ENCODE measurements at regions of chr6 and their contacts with region 1.

Region 1: GRCh38 chr6:148501178-148501590 is 158.5 kb downstream of the SASH1 start:
- DNase-seq: peak; percentile 87
- ATAC-seq: peak; percentile 100
- H3K4me3 ChIP-seq: no peak overlapping the region
- H3K27ac ChIP-seq: peak overlapping the region; percentile 52
- H3K4me1 ChIP-seq: peaks cover 11% of the 10 kb centered on the region
- H3K27me3 ChIP-seq: no peaks in the 10 kb centered on the region
- CTCF ChIP-seq: no peak

Region 2: DNA sequence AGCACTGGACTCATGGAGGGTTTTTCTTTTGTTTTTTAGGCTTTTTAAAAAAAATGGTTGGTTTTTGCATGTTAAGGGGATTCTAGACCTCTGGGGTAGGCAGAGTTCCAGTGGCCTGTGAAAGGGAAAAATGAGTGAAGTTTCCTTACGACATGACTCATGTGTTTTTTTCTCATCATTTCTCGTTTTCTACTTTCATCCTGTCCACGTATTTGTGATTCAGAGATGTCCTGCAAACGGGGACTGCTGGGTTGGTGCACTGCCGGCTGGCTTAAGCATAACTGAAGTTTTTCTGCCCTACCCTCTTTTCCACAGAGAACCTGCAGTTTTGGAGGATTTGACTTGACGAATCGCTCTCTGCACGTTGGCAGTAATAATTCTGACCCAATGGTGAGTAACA is 23.8 kb after region 1 on chr6:
- CTCF ChIA-PET with region 1: no interaction called
- POLR2A ChIA-PET with region 1: interaction called, 4 read pairs
- intact Hi-C with region 1: loop called (anchors 2 kb)
- DNase-seq: peak; percentile 68
- ATAC-seq: peak; percentile 84
- H3K4me3 ChIP-seq: peak overlapping the region; percentile 69
- H3K27ac ChIP-seq: peak overlapping the region; percentile 98
- H3K4me1 ChIP-seq: peaks cover 25% of the 10 kb centered on the region
- H3K27me3 ChIP-seq: no peaks in the 10 kb centered on the region
- CTCF ChIP-seq: no peak

Region 3: DNA sequence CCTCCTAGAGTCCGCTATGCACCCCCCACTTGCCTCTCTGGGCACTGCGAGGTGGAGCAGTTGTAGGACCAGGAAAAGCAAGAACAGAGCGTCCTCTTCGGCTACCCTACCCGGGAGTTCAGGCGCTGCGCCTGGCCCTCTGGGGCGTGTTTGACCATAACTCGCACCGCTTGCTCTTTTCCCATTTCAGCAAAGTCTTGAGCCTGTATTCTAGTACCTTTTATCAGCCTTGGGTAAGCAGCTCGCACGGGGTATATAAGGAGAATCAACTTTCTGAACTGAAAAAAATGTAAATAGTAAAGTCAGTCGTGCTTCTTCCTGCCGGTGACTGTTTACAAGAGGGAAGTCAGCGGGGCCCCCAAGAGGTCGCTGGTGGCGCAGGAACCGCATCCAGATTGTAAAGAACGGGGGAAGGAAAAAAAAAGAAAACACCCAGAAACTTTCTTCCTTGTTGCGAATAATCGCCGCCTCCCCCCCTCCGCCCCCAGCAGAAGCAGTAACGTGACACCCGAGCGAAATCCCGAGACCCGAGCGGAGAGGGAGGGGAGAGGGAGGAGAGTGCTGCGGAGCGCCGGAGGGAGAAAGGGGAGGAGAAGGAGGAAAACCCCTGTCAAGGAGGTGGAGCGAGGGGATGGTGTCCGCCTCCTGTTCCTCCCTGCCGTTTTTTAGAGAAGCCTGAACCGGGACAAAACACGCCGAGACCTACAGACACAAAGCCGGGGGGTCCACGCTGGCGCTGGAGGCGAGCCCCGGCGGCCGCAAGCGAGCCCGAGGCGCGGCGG is 245.4 kb after region 1 on chr6 and contains the start of gene UST:
- CTCF ChIA-PET with region 1: no interaction called
- POLR2A ChIA-PET with region 1: no interaction called
- intact Hi-C with region 1: no loop called
- DNase-seq: peak; percentile 74
- ATAC-seq: peak; percentile 71
- H3K4me3 ChIP-seq: peak within 1 kb of the TSS; percentile 88
- H3K27ac ChIP-seq: 0 out of 2 replicates have a peak within 1 kb of the TSS, but pooled peaks have one; percentile 5
- H3K4me1 ChIP-seq: peaks cover 7% of the 10 kb centered on the region; the same call in 1 of the 2 replicates
- H3K27me3 ChIP-seq: no peaks in the 10 kb centered on the region
- CTCF ChIP-seq: peak; percentile 51; the same call in 1 of the 2 replicates
- total RNA-seq, gene UST: 3.9 and 7.9 TPM in 2 replicates

Region 4: DNA sequence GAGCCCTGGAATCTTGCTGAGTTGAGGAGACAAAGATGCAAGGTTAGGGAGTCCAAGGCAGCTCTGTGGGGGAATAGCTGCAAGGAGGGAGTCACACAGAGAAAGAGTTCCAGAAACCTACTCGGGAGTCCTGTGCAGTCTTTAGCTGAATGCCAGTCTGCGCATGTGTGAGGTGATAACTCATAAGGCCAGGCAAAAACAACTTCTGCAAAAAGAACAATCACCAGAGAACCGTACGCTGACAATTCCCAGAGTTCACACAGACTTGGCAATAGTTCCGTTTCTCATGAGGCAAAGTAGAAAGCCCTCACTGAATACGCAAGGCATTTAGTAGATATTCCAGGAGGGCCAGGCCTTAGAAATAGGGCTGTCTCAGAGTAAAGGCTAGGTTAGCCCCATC is 681.1 kb after region 1 on chr6:
- CTCF ChIA-PET with region 1: no interaction called
- POLR2A ChIA-PET with region 1: no interaction called
- intact Hi-C with region 1: no loop called
- DNase-seq: no peak
- ATAC-seq: no peak
- H3K4me3 ChIP-seq: no peak overlapping the region
- H3K27ac ChIP-seq: no peak overlapping the region
- H3K4me1 ChIP-seq: no peaks in the 10 kb centered on the region
- H3K27me3 ChIP-seq: no peaks in the 10 kb centered on the region
- CTCF ChIP-seq: no peak

Measured in PC-3 (cell line).